ENCODE measurements at regions of chr14 and their contacts with region 1.

Region 1: DNA sequence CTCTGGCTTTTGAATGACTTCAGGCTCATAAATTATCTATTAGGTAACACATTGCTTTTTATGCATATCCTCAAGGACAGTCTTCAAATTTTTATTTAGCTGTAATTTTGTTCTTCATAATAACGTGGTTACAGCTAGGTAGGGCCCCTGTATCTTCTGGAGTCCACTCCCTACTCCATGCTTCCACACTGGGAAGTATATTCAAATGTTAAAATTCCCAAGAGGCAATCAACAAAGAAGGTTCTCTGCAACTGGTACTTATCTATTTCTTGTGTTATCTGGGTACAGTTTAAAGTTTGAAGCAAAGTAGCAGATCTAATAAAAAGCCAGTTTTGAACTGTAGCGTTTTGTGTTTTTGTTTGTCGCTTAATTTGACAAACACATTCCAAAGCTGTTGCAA is 20.1 kb upstream of the BAZ1A start:
- DNase-seq: no peak
- H3K4me3 ChIP-seq: no peak overlapping the region
- CTCF ChIP-seq: no peak
- POLR2A ChIP-seq: no peak

Region 2: GRCh38 chr14:35534862-35535482 is 639.7 kb after region 1 on chr14:
- intact Hi-C with region 1: loop called (anchors 5 kb)
- DNase-seq: peak; percentile 17 to 86
- H3K4me3 ChIP-seq: no peak overlapping the region
- CTCF ChIP-seq: no peak
- POLR2A ChIP-seq: no peak